ENCODE measurements at regions of chr17 and their contacts with region 1.

Region 1: DNA sequence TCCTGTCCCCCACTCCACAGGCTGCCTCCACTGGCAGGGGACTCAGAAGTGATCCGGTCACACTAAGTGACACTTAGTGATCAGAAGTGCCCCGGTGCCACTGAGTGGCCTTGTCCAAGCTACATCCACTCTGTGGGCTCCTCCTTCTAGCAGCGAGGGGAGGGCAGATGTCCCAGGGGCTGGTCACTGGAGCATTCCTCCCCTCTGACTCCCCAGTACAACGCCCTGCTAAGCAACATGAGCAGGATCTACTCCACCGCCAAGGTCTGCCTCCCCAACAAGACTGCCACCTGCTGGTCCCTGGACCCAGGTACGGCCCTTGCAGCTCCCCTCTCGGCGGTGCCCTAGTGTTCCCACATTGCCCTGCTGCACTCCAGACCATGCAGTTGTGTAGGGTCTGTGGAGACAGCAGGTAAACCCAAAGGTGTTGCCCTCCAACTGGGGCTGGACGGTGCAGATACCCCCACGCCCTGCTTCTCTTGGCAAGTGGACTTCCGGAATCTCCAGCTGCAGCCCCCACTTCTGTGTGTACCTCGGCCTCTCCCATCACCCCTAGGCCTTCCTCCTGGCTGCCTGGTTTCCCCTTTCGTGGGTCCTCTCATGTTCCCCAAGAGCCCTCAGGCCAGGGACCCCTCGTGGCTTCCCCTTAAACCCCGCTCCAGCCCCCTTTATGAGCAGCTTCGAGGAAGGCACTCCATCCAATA is 2.1 kb downstream of the ACE start:
- DNase-seq: peak; percentile 85 to 93 (median 90)
- H3K4me3 ChIP-seq: no peak overlapping the region
- H3K27ac ChIP-seq: no peak overlapping the region
- H3K4me1 ChIP-seq: peaks cover 17 to 37% of the 10 kb centered on the region in 2 donors
- H3K27me3 ChIP-seq: no peaks in the 10 kb centered on the region
- CTCF ChIP-seq: peak; percentile 59 to 91 (median 80)
- POLR2A ChIP-seq: no peak

Region 2: DNA sequence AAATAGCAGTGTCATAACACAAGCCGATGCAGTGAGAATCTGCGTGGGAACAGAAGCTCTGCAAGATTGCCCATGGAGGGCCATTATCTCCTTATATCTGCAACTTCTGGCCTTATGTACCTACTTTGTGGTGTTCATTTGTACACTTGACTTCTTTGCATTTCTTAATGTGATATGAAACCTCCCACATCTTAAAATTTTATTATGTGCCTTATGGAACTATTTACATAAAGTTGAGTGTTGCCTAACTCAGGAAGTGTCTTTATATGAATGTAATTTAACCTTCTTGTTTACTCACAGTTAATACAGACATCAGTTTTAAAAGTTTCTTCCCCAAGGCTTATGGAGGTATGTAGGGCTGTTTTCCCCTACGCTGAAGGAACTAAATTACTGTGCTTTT is 523.0 kb before region 1 on chr17:
- intact Hi-C with region 1: no loop called
- DNase-seq: no peak
- H3K4me3 ChIP-seq: no peak overlapping the region
- H3K27ac ChIP-seq: no peak overlapping the region
- H3K4me1 ChIP-seq: no peaks in the 10 kb centered on the region
- H3K27me3 ChIP-seq: no peaks in the 10 kb centered on the region
- CTCF ChIP-seq: no peak
- POLR2A ChIP-seq: no peak

Region 3: DNA sequence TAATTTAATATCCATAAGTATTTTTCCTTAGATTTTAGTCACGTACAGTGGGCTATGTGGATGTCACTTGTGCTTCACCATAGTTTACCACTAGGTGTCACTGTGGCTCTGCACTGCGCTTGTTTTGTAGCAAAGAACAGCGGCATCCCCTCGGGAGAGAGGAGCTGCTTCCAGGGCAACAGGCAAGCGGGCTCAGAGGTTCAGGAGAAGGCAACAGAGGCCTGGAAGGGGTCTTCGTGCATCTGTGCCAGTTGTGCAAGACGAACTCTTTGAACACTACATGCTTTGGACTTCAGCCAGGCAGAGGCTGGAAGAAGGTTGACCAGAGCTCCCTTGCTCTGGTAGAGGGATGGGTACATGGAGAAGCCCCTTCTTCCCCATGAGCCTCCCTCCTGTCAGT is 53.5 kb before region 1 on chr17:
- intact Hi-C with region 1: loop called (anchors 2 to 5 kb)
- DNase-seq: peak; percentile 67 to 94 (median 80)
- H3K4me3 ChIP-seq: no peak overlapping the region
- H3K27ac ChIP-seq: no peak overlapping the region
- H3K4me1 ChIP-seq: no peaks in the 10 kb centered on the region
- H3K27me3 ChIP-seq: no peaks in the 10 kb centered on the region
- CTCF ChIP-seq: peak; percentile 90 to 98 (median 96)
- POLR2A ChIP-seq: no peak

Region 4: GRCh38 chr17:63537991-63538692 is 59.2 kb after region 1 on chr17:
- intact Hi-C with region 1: no loop called
- DNase-seq: no peak
- H3K4me3 ChIP-seq: no peak overlapping the region
- H3K27ac ChIP-seq: no peak overlapping the region
- H3K4me1 ChIP-seq: peaks cover 0 to 6% of the 10 kb centered on the region in 2 donors
- H3K27me3 ChIP-seq: peaks cover 10% of the 10 kb centered on the region
- CTCF ChIP-seq: no peak
- POLR2A ChIP-seq: no peak